Calu3 (cell line): ENCODE measurements at regions of chr19 and their contacts with region 1.

Region 1: DNA sequence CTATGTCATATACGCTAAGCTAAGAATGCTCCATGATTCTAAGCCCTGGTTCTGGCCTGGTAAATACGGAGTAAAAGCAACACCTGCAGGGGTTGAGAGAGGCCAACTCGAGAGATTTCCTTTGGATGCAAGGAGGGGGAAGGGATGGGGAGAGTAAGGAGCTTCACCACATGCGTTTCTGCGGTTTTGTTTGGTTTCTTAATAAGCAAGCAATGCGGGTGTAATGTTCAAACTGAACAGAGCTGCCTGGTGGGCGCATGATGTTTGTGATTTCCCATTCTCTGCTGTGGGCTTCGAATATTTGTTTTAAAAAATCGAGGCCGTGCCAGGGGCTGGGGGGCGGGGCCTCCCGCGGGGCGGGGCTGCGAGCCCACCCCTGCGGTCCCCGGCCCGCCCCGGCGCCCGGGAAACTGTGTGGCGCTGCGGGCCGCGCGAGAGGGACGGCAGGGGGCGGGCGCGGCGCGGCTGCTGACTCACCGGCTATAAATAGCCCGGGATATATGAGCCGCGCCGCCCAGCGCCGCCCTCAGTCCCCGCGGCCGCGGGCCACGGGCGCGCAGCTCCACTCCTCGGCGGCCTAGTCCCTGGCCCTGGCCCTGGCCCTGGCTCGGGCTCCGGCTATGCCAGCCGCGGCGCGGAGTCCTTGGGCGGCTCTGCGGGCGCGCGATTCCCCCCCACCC is 5.1 kb downstream of the BBC3 start:
- DNase-seq: peak; percentile 92
- H3K4me3 Mint-ChIP-seq: no peak overlapping the region
- H3K27ac Mint-ChIP-seq: peak overlapping the region; percentile 87
- H3K4me1 Mint-ChIP-seq: no peaks in the 10 kb centered on the region
- H3K27me3 Mint-ChIP-seq: no peaks in the 10 kb centered on the region
- CTCF ChIP-seq: peak; percentile 64

Region 2: GRCh38 chr19:47210689-47211316 is 15.1 kb before region 1 on chr19:
- CTCF ChIA-PET with region 1: interaction called, 26 read pairs
- intact Hi-C with region 1: no loop called
- DNase-seq: peak; percentile 88
- H3K4me3 Mint-ChIP-seq: peak overlapping the region; percentile 18
- H3K27ac Mint-ChIP-seq: peak overlapping the region; percentile 95
- H3K4me1 Mint-ChIP-seq: peaks cover 11% of the 10 kb centered on the region
- H3K27me3 Mint-ChIP-seq: no peaks in the 10 kb centered on the region
- CTCF ChIP-seq: peak; percentile 88